Naive thymus-derived CD4-positive, alpha-beta T cell (primary cell): ENCODE measurements at regions of chr15 and their contacts with region 1.

Region 1: GRCh38 chr15:31352911-31353811 is 26.5 kb downstream of the KLF13 start:
- DNase-seq: peak in 7 of 9 donors; percentile 49 to 68 (median 59)
- ATAC-seq: peak; percentile 68
- H3K4me3 ChIP-seq: peak overlapping the region; percentile 47
- H3K4me3 Mint-ChIP-seq: peak overlapping the region; percentile 80 to 88 (median 84)
- H3K27ac ChIP-seq: peak overlapping the region; percentile 94
- H3K27ac Mint-ChIP-seq: peak overlapping the region; percentile 92 to 99 (median 97)
- H3K4me1 ChIP-seq: peaks cover 96 to 99% of the 10 kb centered on the region in 2 donors
- H3K4me1 Mint-ChIP-seq: peaks cover 79 to 100% (median 94%) of the 10 kb centered on the region in 7 donors
- H3K27me3 ChIP-seq: no peaks in the 10 kb centered on the region
- H3K27me3 Mint-ChIP-seq: no peaks in the 10 kb centered on the region

Region 2: GRCh38 chr15:31338879-31339557 is 14.1 kb before region 1 on chr15:
- CTCF ChIA-PET with region 1: interaction called, 4 read pairs
- POLR2A ChIA-PET with region 1: interaction called, 529 read pairs
- intact Hi-C with region 1: no loop called
- DNase-seq: peak in 1 of 9 donors; percentile 76
- ATAC-seq: peak; percentile 47
- H3K4me3 ChIP-seq: peak overlapping the region; percentile 3
- H3K4me3 Mint-ChIP-seq: peak overlapping the region; percentile 27 to 98 (median 74)
- H3K27ac ChIP-seq: peak overlapping the region; percentile 94
- H3K27ac Mint-ChIP-seq: peak overlapping the region; percentile 79 to 99 (median 91)
- H3K4me1 ChIP-seq: peaks cover 95 to 98% of the 10 kb centered on the region in 2 donors
- H3K4me1 Mint-ChIP-seq: peaks cover 85 to 100% (median 98%) of the 10 kb centered on the region in 7 donors
- H3K27me3 ChIP-seq: no peaks in the 10 kb centered on the region
- H3K27me3 Mint-ChIP-seq: no peaks in the 10 kb centered on the region

Region 3: DNA sequence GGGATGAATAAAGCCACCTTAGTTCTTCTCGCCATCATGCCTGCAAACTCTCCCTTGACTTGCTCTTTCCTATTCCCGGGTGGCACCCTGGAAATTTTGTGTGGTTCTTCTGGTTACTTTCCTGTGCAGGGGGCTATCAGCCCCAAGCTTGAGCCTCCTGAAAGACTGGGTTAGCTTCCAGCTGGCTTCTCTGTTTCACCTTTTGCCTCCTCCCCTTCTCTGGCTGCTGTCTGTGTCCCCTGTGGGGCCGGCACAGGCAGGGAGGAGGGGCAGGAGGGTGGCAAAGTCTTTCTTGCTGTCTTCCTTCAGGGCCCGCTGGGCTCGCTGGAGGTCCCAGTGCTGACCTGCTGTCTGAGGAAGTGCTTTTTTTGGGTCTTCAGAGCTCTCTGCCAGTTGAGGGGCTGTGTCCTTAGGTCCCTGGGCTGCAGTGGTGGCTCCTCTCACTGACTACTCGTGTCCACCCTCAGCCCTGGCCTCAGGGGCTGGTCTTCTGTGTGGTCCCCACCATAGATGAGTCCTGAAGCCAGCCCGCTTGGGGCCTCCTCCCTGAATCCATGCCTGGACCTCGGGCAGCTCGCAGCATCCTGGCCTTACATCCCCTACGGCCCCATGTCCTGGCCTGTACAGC is 170.0 kb after region 1 on chr15:
- CTCF ChIA-PET with region 1: no interaction called
- POLR2A ChIA-PET with region 1: no interaction called
- intact Hi-C with region 1: no loop called
- DNase-seq: no peak
- ATAC-seq: no peak
- H3K4me3 ChIP-seq: no peak overlapping the region
- H3K4me3 Mint-ChIP-seq: no peak overlapping the region
- H3K27ac ChIP-seq: no peak overlapping the region
- H3K27ac Mint-ChIP-seq: no peak overlapping the region
- H3K4me1 ChIP-seq: no peaks in the 10 kb centered on the region
- H3K4me1 Mint-ChIP-seq: no peaks in the 10 kb centered on the region
- H3K27me3 ChIP-seq: no peaks in the 10 kb centered on the region
- H3K27me3 Mint-ChIP-seq: peaks cover 0 to 12% (median 7%) of the 10 kb centered on the region in 5 donors